ENCODE measurements at regions of chr7 and their contacts with region 1.

Region 1: DNA sequence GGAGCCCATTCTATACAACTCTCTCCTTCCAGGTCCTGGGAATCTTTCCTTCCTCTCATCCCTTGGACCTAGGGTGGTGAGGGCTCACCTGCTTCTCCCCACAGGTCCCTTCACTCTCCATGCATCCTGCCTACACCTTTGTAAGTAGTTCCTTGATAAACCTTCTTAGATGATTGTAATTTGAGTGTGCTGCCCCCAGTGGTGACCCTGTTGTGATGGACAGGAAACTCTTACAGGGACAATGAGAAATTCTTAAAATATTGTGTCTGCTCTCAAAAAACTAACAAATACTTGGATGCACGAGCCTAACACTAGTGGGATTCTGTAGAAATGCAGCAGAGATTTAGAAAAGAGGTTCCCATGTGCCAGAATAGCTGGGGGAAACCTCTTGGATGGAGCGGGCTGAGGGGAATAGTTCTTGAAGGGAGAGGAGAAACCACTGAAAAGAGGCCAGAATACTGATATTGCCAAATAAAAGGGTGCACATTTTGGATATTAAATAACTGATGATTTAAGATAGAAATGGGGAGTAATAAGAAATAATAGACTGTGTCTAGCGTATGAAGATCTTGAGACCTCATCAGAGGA is 6.7 kb upstream of the PAXIP1 start:
- DNase-seq: no peak
- H3K4me3 ChIP-seq: no peak overlapping the region
- H3K27ac ChIP-seq: no peak overlapping the region
- H3K4me1 ChIP-seq: no peaks in the 10 kb centered on the region
- H3K27me3 ChIP-seq: no peaks in the 10 kb centered on the region
- CTCF ChIP-seq: no peak
- POLR2A ChIP-seq: no peak

Region 2: DNA sequence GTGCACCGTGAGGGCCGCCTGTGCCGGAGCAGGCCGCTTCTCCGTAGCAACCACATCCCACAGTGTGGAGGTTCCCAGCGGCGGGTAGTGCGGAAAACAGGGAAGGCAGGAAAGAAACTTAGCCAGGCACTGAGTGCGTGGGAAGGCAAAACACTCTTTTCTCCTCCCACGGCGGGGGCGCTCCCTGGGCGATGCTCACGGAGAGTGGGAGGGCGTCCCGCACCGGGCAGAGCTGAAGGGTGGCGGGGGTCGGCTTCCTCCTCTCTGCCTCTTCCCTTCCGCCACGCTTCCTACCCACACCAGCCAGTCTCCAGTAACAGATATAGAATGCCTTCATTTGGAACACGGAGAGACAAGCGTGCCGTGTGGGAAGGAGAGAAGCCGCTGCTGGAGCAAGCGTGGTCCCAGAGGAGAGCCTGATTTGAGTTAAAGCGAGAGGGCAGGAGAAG is 259.3 kb before region 1 on chr7:
- intact Hi-C with region 1: no loop called
- DNase-seq: no peak
- H3K4me3 ChIP-seq: no peak overlapping the region
- H3K27ac ChIP-seq: no peak overlapping the region
- H3K4me1 ChIP-seq: no peaks in the 10 kb centered on the region
- H3K27me3 ChIP-seq: no peaks in the 10 kb centered on the region
- CTCF ChIP-seq: no peak
- POLR2A ChIP-seq: no peak

Region 3: GRCh38 chr7:155858521-155859061 is 848.9 kb after region 1 on chr7:
- intact Hi-C with region 1: loop called (anchors 5 kb)
- DNase-seq: peak; percentile 54 to 91
- H3K4me3 ChIP-seq: no peak overlapping the region
- H3K27ac ChIP-seq: no peak overlapping the region
- H3K4me1 ChIP-seq: peaks cover 11% of the 10 kb centered on the region
- H3K27me3 ChIP-seq: no peaks in the 10 kb centered on the region
- CTCF ChIP-seq: no peak
- POLR2A ChIP-seq: no peak

Measured in vagina (tissue), 2 donors.